RWPE1 (cell line): ENCODE measurements at regions of chr19 and their contacts with region 1.

Region 1: GRCh38 chr19:35240327-35240726 is 8.5 kb upstream of the LSR start:
- DNase-seq: no peak
- H3K27ac ChIP-seq: no peak overlapping the region
- CTCF ChIP-seq: no peak

Region 2: GRCh38 chr19:35318650-35319448 is 78.5 kb after region 1 on chr19:
- CTCF ChIA-PET with region 1: no interaction called
- POLR2A ChIA-PET with region 1: no interaction called
- DNase-seq: peak; percentile 90
- H3K27ac ChIP-seq: peak overlapping the region; percentile 84
- CTCF ChIP-seq: no peak

Region 3: DNA sequence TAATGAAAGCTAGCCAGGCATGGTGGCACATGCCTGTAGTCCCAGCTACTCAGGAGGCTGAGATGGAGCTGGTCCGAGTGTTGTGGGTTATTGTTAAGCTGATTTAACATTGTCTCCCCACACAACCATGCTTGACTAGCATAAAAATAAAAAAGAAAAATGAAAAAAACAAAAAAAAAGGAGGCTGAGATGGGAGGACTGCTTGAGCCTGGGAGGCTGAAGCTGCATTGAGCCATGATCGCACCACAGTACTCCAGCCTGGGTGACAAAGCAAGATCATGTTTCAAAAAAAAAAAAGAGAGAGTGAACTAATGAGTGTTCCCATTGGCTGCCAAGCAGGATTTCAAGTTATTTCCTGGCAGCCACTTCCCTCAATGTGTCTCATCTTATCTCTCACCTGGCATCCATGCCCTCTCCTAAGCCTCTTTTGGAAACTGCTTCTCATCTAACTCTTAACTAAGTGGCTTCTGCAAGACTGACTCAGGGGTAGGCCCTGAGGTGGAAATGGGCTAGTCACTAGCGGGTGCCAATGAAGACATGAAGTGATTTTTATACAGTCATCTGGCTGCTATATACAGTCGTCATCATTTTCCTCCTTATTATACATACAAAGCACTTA is 808.9 kb after region 1 on chr19:
- CTCF ChIA-PET with region 1: no interaction called
- POLR2A ChIA-PET with region 1: interaction called, 10 read pairs
- DNase-seq: peak; percentile 48
- H3K27ac ChIP-seq: peak overlapping the region; percentile 82
- CTCF ChIP-seq: no peak